WTC11 (cell line): ENCODE measurements at regions of chr20 and their contacts with region 1.

Region 1: GRCh38 chr20:52312132-52312729 is 120.7 kb upstream of the ZFP64 start:
- DNase-seq: peak; percentile 31
- ATAC-seq: peak; percentile 44; the same call in 1 of the 2 replicates
- H3K4me3 Mint-ChIP-seq: no peak overlapping the region
- H3K27ac Mint-ChIP-seq: no peak overlapping the region
- H3K4me1 Mint-ChIP-seq: peaks cover 45% of the 10 kb centered on the region
- H3K27me3 Mint-ChIP-seq: peaks cover 22% of the 10 kb centered on the region
- CTCF ChIP-seq: peak; percentile 31; the same call in 1 of the 2 replicates

Region 2: GRCh38 chr20:52275181-52275691 is 37.0 kb before region 1 on chr20:
- CTCF ChIA-PET with region 1: interaction called, 13 read pairs
- POLR2A ChIA-PET with region 1: no interaction called
- DNase-seq: no peak
- ATAC-seq: no peak
- H3K4me3 Mint-ChIP-seq: no peak overlapping the region
- H3K27ac Mint-ChIP-seq: no peak overlapping the region
- H3K4me1 Mint-ChIP-seq: peaks cover 7% of the 10 kb centered on the region; the same call in 1 of the 2 replicates
- H3K27me3 Mint-ChIP-seq: no peaks in the 10 kb centered on the region
- CTCF ChIP-seq: no peak

Region 3: GRCh38 chr20:52295556-52295955 is 16.7 kb before region 1 on chr20:
- CTCF ChIA-PET with region 1: interaction called, 20 read pairs
- POLR2A ChIA-PET with region 1: no interaction called
- DNase-seq: no peak
- ATAC-seq: no peak
- H3K4me3 Mint-ChIP-seq: no peak overlapping the region
- H3K27ac Mint-ChIP-seq: no peak overlapping the region
- H3K4me1 Mint-ChIP-seq: no peaks in the 10 kb centered on the region
- H3K27me3 Mint-ChIP-seq: no peaks in the 10 kb centered on the region; the same call in 1 of the 2 replicates
- CTCF ChIP-seq: no peak

Region 4: GRCh38 chr20:52340036-52340648 is 27.9 kb after region 1 on chr20:
- CTCF ChIA-PET with region 1: no interaction called
- POLR2A ChIA-PET with region 1: no interaction called
- DNase-seq: no peak
- ATAC-seq: peak; percentile 51
- H3K4me3 Mint-ChIP-seq: no peak overlapping the region
- H3K27ac Mint-ChIP-seq: no peak overlapping the region
- H3K4me1 Mint-ChIP-seq: no peaks in the 10 kb centered on the region
- H3K27me3 Mint-ChIP-seq: no peaks in the 10 kb centered on the region
- CTCF ChIP-seq: no peak

Region 5: DNA sequence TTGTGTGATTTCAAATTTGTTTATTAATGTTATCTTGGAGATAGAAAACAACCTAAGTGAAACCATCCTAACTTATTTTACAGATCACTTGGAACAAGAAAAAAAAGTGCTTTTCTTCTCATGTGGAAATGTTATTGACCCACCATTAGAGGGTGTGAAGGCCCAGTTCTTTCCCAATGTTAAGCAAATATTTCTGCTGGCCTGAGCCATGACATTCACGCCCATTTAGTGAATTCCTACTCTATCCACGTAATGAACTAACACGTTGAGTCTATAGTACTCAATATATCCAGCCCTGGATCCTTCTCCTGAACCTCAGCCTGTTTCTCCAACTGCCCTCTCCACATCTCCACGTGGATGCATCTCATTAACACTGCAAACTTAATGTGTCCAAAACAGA is 59.9 kb after region 1 on chr20:
- CTCF ChIA-PET with region 1: interaction called, 17 read pairs
- POLR2A ChIA-PET with region 1: no interaction called
- DNase-seq: no peak
- ATAC-seq: no peak
- H3K4me3 Mint-ChIP-seq: no peak overlapping the region
- H3K27ac Mint-ChIP-seq: no peak overlapping the region
- H3K4me1 Mint-ChIP-seq: peaks cover 9% of the 10 kb centered on the region
- H3K27me3 Mint-ChIP-seq: no peaks in the 10 kb centered on the region
- CTCF ChIP-seq: no peak

Region 6: GRCh38 chr20:52379723-52380336 is 67.6 kb after region 1 on chr20:
- CTCF ChIA-PET with region 1: interaction called, 17 read pairs
- POLR2A ChIA-PET with region 1: no interaction called
- DNase-seq: peak; percentile 57
- ATAC-seq: no peak
- H3K4me3 Mint-ChIP-seq: no peak overlapping the region
- H3K27ac Mint-ChIP-seq: no peak overlapping the region
- H3K4me1 Mint-ChIP-seq: no peaks in the 10 kb centered on the region
- H3K27me3 Mint-ChIP-seq: no peaks in the 10 kb centered on the region
- CTCF ChIP-seq: peak; percentile 88

Region 7: GRCh38 chr20:52410182-52410647 is 98.0 kb after region 1 on chr20:
- CTCF ChIA-PET with region 1: no interaction called
- POLR2A ChIA-PET with region 1: no interaction called
- DNase-seq: no peak
- ATAC-seq: no peak
- H3K4me3 Mint-ChIP-seq: no peak overlapping the region
- H3K27ac Mint-ChIP-seq: no peak overlapping the region
- H3K4me1 Mint-ChIP-seq: no peaks in the 10 kb centered on the region
- H3K27me3 Mint-ChIP-seq: no peaks in the 10 kb centered on the region
- CTCF ChIP-seq: no peak

Region 8: GRCh38 chr20:52513828-52514227 is 201.6 kb after region 1 on chr20:
- CTCF ChIA-PET with region 1: interaction called, 11 read pairs
- POLR2A ChIA-PET with region 1: no interaction called
- DNase-seq: no peak
- ATAC-seq: peak; percentile 62; the same call in 1 of the 2 replicates
- H3K4me3 Mint-ChIP-seq: no peak overlapping the region
- H3K27ac Mint-ChIP-seq: no peak overlapping the region
- H3K4me1 Mint-ChIP-seq: peaks cover under 1% of the 10 kb centered on the region; the same call in 1 of the 2 replicates
- H3K27me3 Mint-ChIP-seq: no peaks in the 10 kb centered on the region
- CTCF ChIP-seq: no peak

Region 9: GRCh38 chr20:53547664-53548239 is 1235.5 kb after region 1 on chr20:
- CTCF ChIA-PET with region 1: interaction called, 11 read pairs
- POLR2A ChIA-PET with region 1: no interaction called
- DNase-seq: peak; percentile 39
- ATAC-seq: peak; percentile 87
- H3K4me3 Mint-ChIP-seq: no peak overlapping the region
- H3K27ac Mint-ChIP-seq: peak overlapping the region; percentile 79; the same call in 1 of the 2 replicates
- H3K4me1 Mint-ChIP-seq: peaks cover 4% of the 10 kb centered on the region
- H3K27me3 Mint-ChIP-seq: no peaks in the 10 kb centered on the region
- CTCF ChIP-seq: peak; percentile 45